K562 (cell line): ENCODE measurements at regions of chr10 and their contacts with region 1.

Region 1: DNA sequence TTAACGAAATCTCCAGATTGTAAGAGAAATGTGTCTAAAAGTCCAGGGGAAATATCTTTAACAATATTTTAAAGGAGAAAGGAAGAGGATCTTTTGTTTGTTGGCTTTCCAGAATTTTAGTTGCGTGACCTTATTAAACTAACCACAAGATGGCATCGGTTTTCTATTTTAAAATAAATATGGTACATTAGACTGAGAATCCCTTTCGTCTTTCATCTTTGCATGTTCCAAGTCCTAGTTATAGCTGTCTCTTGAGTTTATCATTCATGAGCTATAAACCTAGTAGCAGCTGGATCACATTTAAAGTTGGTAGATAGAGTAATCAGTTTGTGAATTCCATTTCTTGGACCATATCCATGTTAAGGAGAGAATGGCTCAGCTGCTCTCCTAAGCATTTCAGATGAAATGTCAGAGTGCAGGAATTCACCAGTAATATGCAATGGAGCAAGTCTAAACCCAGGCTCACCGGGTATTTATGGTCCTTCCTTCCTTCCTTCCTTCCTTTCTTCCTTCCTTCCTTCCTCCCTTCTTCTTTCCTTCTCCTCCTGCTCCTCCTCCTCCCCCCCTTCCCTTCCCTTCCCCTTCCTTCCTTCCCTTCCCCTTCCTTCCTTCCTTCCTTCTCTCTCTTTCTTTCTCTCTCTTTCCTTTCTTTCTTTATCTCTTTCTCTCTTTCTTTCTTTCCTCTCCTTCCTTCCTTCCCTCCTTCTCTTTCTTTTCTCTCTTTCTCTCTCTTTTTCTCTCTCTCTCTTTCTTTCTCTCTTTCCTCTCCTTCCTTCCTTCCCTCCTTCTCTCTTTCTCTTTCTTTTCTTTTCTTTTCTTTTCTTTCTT is 57.8 kb upstream of the RAB18 start:
- DNase-seq: peak in 2 of 4 experiments; percentile 6 to 22
- ATAC-seq: peak; percentile 70
- H3K4me3 ChIP-seq: no peak overlapping the region
- H3K27ac ChIP-seq: no peak overlapping the region
- H3K4me1 ChIP-seq: no peaks in the 10 kb centered on the region
- H3K27me3 ChIP-seq: no peaks in the 10 kb centered on the region; a peak in 1 of 5 replicates
- CTCF ChIP-seq: peak in 1 of 3 experiments; percentile 64; a peak in 2 of 6 replicates
- EP300 ChIP-seq: no peak
- POLR2A ChIP-seq: no peak
- RAD21 ChIP-seq: peak; percentile 58 to 71

Region 2: GRCh38 chr10:27558612-27559020 is 112.3 kb after region 1 on chr10:
- CTCF ChIA-PET with region 1: no interaction called
- POLR2A ChIA-PET with region 1: no interaction called
- in situ Hi-C with region 1: no loop called
- intact Hi-C with region 1: loop called (anchors 5 kb)
- DNase-seq: peak; percentile 27 to 78 (median 46)
- ATAC-seq: peak; percentile 94
- H3K4me3 ChIP-seq: no peak overlapping the region
- H3K27ac ChIP-seq: no peak overlapping the region
- H3K4me1 ChIP-seq: no peaks in the 10 kb centered on the region
- H3K27me3 ChIP-seq: no peaks in the 10 kb centered on the region; a peak in 1 of 5 replicates
- CTCF ChIP-seq: peak; percentile 74 to 85 (median 75)
- EP300 ChIP-seq: no peak
- POLR2A ChIP-seq: no peak
- RAD21 ChIP-seq: peak; percentile 73 to 84

Region 3: DNA sequence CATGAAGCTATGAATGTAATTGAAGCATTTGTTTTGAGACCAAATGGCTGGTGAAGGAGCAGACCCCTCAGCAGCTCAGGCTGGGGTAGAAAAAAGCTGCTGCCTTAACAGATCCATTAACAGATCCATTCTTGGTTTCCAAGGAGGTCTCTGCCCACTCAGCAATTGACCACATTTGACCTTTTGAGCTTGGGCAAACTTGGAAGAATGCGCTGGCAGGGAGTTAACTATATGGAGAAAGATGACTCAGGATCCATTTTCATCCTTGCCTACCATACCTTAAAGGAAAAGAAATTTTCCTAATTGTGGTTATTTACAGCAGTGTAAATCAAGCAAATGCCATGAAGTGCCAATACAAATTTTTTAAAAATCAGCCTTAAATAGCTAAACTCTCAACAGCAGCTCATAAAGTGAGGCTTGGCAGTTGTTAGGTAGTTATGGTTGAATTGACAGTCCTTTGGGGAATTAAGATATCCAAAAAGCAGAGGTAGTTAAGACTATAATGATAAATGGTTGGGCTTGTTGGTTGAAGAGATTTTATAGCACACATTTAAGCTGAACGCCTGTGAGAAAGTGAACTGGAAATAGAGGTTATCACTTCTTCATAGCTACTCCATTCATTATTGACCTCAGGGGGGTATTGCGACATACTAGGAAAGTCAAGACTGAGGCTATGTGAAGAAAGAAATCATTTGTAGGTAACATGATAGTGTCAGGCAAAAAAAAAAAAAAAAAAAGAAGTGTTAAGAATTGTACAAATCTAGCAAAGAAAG is 215.4 kb after region 1 on chr10:
- CTCF ChIA-PET with region 1: interaction called, 17 read pairs
- POLR2A ChIA-PET with region 1: no interaction called
- in situ Hi-C with region 1: loop called (anchors 5 kb)
- intact Hi-C with region 1: loop called (anchors 2 kb)
- DNase-seq: no peak
- ATAC-seq: no peak
- H3K4me3 ChIP-seq: no peak overlapping the region
- H3K27ac ChIP-seq: no peak overlapping the region
- H3K4me1 ChIP-seq: no peaks in the 10 kb centered on the region
- H3K27me3 ChIP-seq: peaks cover 14 to 18% of the 10 kb centered on the region in 2 experiments; a peak in 4 of 5 replicates
- CTCF ChIP-seq: no peak
- EP300 ChIP-seq: no peak
- POLR2A ChIP-seq: no peak
- RAD21 ChIP-seq: no peak

Region 4: GRCh38 chr10:27949528-27950241 is 503.4 kb after region 1 on chr10:
- CTCF ChIA-PET with region 1: no interaction called
- POLR2A ChIA-PET with region 1: no interaction called
- in situ Hi-C with region 1: no loop called
- intact Hi-C with region 1: no loop called
- DNase-seq: no peak
- ATAC-seq: no peak
- H3K4me3 ChIP-seq: no peak overlapping the region
- H3K27ac ChIP-seq: no peak overlapping the region
- H3K4me1 ChIP-seq: no peaks in the 10 kb centered on the region
- H3K27me3 ChIP-seq: no peaks in the 10 kb centered on the region; a peak in 1 of 5 replicates
- CTCF ChIP-seq: no peak
- EP300 ChIP-seq: no peak
- POLR2A ChIP-seq: no peak
- RAD21 ChIP-seq: no peak

Region 5: GRCh38 chr10:28179006-28179742 is 732.9 kb after region 1 on chr10:
- CTCF ChIA-PET with region 1: no interaction called
- POLR2A ChIA-PET with region 1: no interaction called
- in situ Hi-C with region 1: no loop called
- intact Hi-C with region 1: loop called (anchors 5 kb)
- DNase-seq: peak; percentile 41 to 65 (median 42)
- ATAC-seq: peak; percentile 78
- H3K4me3 ChIP-seq: no peak overlapping the region
- H3K27ac ChIP-seq: no peak overlapping the region
- H3K4me1 ChIP-seq: no peaks in the 10 kb centered on the region
- H3K27me3 ChIP-seq: no peaks in the 10 kb centered on the region
- CTCF ChIP-seq: peak; percentile 45 to 77 (median 49); a peak in 4 of 6 replicates
- EP300 ChIP-seq: no peak
- POLR2A ChIP-seq: no peak
- RAD21 ChIP-seq: peak; percentile 79 to 81

Region 6: GRCh38 chr10:28236591-28236990 is 790.3 kb after region 1 on chr10:
- CTCF ChIA-PET with region 1: interaction called, 3 read pairs
- POLR2A ChIA-PET with region 1: no interaction called
- in situ Hi-C with region 1: loop called (anchors 10 kb)
- intact Hi-C with region 1: loop called (anchors 5 kb)
- DNase-seq: peak in 1 of 4 experiments; percentile 4
- ATAC-seq: no peak
- H3K4me3 ChIP-seq: no peak overlapping the region
- H3K27ac ChIP-seq: no peak overlapping the region
- H3K4me1 ChIP-seq: no peaks in the 10 kb centered on the region
- H3K27me3 ChIP-seq: peaks cover 8 to 9% of the 10 kb centered on the region in 2 experiments; a peak in 4 of 5 replicates
- CTCF ChIP-seq: no peak
- EP300 ChIP-seq: no peak
- POLR2A ChIP-seq: no peak
- RAD21 ChIP-seq: no peak

Region 7: DNA sequence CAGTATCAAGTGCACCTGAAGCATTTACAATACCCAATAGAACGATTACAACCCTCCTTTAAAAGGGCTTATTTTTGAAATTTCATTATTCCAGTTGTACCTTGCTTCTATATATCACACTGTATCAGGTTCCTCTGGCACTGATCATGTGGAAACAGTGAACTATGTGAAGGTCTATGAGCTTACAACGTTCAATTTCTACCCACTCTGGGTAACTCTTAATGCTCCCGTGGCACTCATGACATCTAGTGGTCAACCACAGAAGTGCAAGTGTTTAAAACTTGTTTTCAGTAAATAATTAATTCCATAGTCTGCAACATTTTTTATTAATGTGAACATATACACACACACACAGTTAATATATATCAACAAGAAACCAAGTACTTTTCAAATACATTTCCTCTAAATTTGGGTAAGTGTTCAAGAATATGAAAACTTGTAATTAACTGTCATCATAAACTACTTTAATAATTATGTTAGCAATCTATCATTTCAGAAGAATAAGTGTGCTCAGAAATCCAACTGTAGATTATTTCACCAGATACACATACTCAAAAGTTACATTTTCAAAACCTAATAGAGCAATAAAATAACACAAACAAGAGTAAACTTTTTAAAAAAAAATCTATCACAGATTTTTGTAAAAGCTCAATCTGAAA is 795.6 kb after region 1 on chr10:
- CTCF ChIA-PET with region 1: interaction called, 3 read pairs
- POLR2A ChIA-PET with region 1: no interaction called
- in situ Hi-C with region 1: loop called (anchors 10 kb)
- intact Hi-C with region 1: loop called (anchors 5 kb)
- DNase-seq: peak; percentile 41 to 49 (median 46)
- ATAC-seq: peak; percentile 73
- H3K4me3 ChIP-seq: no peak overlapping the region
- H3K27ac ChIP-seq: no peak overlapping the region
- H3K4me1 ChIP-seq: no peaks in the 10 kb centered on the region
- H3K27me3 ChIP-seq: peaks cover 3 to 4% of the 10 kb centered on the region in 2 experiments; a peak in 4 of 5 replicates
- CTCF ChIP-seq: peak; percentile 55 to 85 (median 77); a peak in 5 of 6 replicates
- EP300 ChIP-seq: no peak
- POLR2A ChIP-seq: no peak
- RAD21 ChIP-seq: peak; percentile 72 to 78